ENCODE measurements at regions of chr6 and their contacts with region 1.

Region 1: GRCh38 chr6:79713701-79714322 is 82.7 kb downstream of the SH3BGRL2 start:
- DNase-seq: peak in 3 of 6 donors; percentile 24 to 52 (median 46)
- ATAC-seq: peak; percentile 64 to 89 (median 83)
- H3K4me3 ChIP-seq: no peak overlapping the region
- H3K27ac ChIP-seq: no peak overlapping the region
- H3K4me1 ChIP-seq: peaks cover 0 to 4% (median 0%) of the 10 kb centered on the region in 3 donors
- H3K27me3 ChIP-seq: no peaks in the 10 kb centered on the region
- CTCF ChIP-seq: peak in 3 of 4 donors; percentile 29 to 61 (median 60)

Region 2: DNA sequence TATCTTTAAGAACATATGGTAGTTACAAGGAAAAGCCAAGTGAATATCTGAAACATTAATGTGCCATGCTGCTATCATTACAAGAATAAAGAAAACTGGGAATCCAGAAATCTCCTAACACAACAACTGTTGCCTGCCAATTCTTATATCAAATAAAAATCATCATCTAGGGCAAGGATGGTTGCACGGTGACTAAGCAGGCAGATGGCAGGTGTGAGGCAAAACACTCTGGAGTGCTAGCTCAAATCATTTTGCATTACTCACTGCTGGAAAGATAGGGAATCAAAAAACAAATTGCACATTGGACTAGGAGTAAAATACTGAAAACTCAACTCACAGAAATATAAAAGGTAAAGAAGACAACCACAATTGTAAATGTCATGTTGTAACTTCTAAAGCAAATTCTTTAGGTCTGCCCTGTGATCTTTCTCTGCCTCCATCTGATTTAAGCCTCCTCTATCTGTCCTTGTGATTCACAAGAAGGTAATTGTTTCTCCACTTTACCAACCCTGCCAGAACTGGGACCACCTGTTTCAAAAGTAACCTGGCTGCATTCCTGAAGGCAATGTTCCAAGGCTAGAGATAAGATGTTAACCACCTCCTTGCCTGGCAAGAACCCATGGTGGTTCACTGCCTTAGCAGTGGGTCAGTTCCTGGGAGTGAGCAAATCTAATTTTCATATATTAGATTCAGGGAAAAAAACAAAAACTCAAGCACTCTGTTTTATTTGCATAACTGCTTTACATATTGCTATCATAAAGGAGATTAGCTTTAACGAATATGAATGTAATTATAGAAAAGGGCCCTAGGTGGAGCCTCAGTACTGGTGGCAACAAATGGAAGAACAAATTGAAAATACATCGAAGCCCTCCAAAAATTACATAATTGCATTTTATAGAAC is 143.4 kb before region 1 on chr6:
- intact Hi-C with region 1: loop called in 1 of 3 experiments (anchors 10 kb)
- DNase-seq: peak in 3 of 6 donors; percentile 55 to 70 (median 68)
- ATAC-seq: peak; percentile 84 to 95 (median 88)
- H3K4me3 ChIP-seq: peak overlapping the region in 2 of 4 donors; percentile 21 to 28
- H3K27ac ChIP-seq: peak overlapping the region; percentile 18 to 78 (median 48)
- H3K4me1 ChIP-seq: peaks cover 7 to 15% (median 11%) of the 10 kb centered on the region in 3 donors
- H3K27me3 ChIP-seq: no peaks in the 10 kb centered on the region
- CTCF ChIP-seq: peak; percentile 19 to 51 (median 41)

Region 3: GRCh38 chr6:79878142-79878753 is 164.4 kb after region 1 on chr6:
- intact Hi-C with region 1: no loop called
- DNase-seq: peak in 4 of 6 donors; percentile 28 to 50 (median 43)
- ATAC-seq: peak; percentile 68 to 84 (median 72)
- H3K4me3 ChIP-seq: no peak overlapping the region
- H3K27ac ChIP-seq: no peak overlapping the region
- H3K4me1 ChIP-seq: no peaks in the 10 kb centered on the region
- H3K27me3 ChIP-seq: no peaks in the 10 kb centered on the region
- CTCF ChIP-seq: no peak

Measured in pancreas (tissue), 10 donors.